Esophagus muscularis mucosa (tissue), 4 donors: ENCODE measurements at regions of chr1 and their contacts with region 1.

Region 1: DNA sequence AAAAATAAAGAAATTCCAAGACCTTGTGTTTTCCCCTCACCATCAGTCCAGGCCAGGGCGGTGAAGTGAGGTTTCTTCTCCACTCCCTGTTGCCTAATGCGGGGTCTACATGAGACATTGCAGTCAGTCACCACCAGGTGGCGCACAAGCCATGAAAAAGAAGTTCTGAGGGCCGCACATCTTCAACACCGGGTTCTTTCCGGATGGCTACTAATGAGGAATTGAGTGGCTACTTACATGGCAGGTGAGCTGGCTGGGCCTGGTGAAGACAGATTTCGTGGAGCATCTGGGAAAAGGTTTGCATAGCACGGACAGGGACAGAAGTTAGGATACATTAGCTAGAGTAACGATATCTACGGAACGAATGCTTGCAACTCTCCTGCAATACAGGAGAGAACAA is 15.8 kb upstream of the S100A11 start:
- DNase-seq: peak; percentile 97
- H3K4me3 ChIP-seq: no peak overlapping the region
- H3K27ac ChIP-seq: no peak overlapping the region
- H3K4me1 ChIP-seq: peaks cover 11 to 16% (median 13%) of the 10 kb centered on the region in 4 donors
- H3K27me3 ChIP-seq: peaks cover 0 to 14% (median 4%) of the 10 kb centered on the region in 4 donors
- CTCF ChIP-seq: peak; percentile 79 to 94 (median 85)
- EP300 ChIP-seq: no peak
- POLR2A ChIP-seq: no peak

Region 2: DNA sequence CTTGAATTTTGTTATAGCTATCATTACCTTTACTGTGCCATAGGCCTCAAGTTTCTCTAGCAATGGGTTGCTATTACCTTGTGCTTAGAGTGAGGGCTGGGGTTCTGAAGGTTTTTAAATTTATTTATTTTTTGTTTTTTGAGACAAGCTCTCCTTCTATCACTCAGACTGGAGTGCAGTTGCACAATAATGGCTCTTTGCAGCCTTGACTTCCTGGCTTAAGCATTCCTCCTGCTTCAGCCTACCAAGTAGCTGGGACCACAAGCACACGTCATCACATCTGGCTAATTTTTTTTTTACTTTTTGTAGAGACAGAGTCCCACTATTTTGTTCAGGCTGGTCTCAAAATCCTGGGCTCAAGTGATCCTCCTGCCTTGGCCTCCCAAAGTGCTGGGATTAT is 399.2 kb before region 1 on chr1:
- intact Hi-C with region 1: no loop called
- DNase-seq: no peak
- H3K4me3 ChIP-seq: no peak overlapping the region
- H3K27ac ChIP-seq: peak overlapping the region in 1 of 4 donors; percentile 10
- H3K4me1 ChIP-seq: peaks cover 0 to 24% (median 20%) of the 10 kb centered on the region in 4 donors
- H3K27me3 ChIP-seq: no peaks in the 10 kb centered on the region
- CTCF ChIP-seq: no peak
- EP300 ChIP-seq: no peak
- POLR2A ChIP-seq: no peak

Region 3: DNA sequence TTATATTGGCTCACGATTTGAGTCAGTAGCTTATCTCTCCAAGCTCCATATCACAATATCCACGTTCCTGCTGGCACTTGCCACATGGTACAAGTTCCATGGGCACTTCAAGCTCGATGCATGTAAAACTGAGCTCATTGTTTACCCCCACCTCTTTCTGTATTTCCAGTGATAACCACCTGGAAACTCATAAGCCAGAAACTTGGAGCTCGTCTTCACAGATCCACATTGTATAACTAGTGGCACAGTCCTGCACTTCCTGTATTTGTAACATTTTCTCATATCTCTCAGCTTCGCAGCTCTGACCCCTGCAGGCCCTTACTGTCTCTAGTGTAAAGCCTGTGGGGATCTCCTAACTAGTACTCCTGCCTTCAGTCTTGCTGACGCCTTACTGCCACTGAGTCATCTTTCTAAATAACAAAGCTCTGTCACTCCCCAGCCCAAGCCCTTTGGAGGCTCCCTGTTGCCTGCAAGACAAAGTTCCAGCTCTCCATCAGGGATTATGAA is 206.5 kb before region 1 on chr1:
- intact Hi-C with region 1: no loop called
- DNase-seq: no peak
- H3K4me3 ChIP-seq: no peak overlapping the region
- H3K27ac ChIP-seq: no peak overlapping the region
- H3K4me1 ChIP-seq: no peaks in the 10 kb centered on the region
- H3K27me3 ChIP-seq: peaks cover 0 to 41% (median 0%) of the 10 kb centered on the region in 4 donors
- CTCF ChIP-seq: no peak
- EP300 ChIP-seq: no peak
- POLR2A ChIP-seq: no peak

Region 4: DNA sequence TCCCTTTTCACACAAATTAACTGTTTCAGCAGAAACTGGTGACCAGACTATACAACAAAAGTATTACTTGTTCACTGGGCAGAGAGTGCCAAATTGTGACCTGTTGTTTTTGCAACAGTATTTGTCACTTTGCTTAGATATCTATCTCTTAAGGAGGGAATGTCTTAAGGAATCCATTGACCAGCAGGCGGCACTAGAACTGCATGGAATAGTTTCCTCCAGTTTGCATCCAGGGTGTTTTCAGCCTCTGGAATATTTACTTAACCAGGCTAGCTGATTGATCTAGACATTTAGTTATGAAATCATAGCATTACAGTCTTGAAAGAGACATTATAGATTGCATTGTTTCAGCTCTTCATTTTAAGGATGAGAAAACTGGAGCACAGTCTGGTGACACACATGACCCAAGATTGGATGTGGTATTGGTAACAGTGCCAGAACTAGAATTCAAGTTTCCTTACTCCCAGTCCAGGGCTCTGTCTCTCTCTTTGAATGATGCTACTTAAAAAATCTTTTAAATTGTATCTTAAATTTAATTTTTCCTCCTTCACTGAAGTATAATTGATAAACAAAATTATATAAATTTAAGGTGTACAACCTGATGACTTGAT is 89.5 kb after region 1 on chr1:
- intact Hi-C with region 1: no loop called
- DNase-seq: peak; percentile 83
- H3K4me3 ChIP-seq: no peak overlapping the region
- H3K27ac ChIP-seq: no peak overlapping the region
- H3K4me1 ChIP-seq: no peaks in the 10 kb centered on the region
- H3K27me3 ChIP-seq: peaks cover 0 to 21% (median 0%) of the 10 kb centered on the region in 4 donors
- CTCF ChIP-seq: peak; percentile 59 to 65 (median 62)
- EP300 ChIP-seq: no peak
- POLR2A ChIP-seq: no peak

Region 5: DNA sequence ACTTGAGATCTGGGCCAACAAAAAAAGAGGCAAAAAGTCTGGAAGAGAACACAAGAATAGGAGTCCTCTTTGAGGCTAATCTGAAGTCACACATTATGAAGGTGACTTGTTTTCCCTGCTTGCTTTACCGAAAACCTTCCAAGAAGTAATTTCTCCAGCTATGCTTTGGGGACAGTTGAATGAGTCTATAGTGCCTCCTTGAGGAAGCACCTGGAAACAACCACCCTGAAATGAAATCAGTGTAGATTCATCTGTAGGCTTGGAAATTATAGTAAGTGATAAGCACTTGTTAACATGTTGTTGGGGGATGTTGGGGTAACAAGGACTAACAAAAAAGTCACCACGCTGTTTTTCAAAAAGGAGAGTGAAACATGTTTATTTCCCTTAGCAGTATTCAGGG is 129.8 kb after region 1 on chr1:
- intact Hi-C with region 1: loop called (anchors 2 kb)
- DNase-seq: no peak
- H3K4me3 ChIP-seq: no peak overlapping the region
- H3K27ac ChIP-seq: no peak overlapping the region
- H3K4me1 ChIP-seq: peaks cover 0 to 7% (median 5%) of the 10 kb centered on the region in 4 donors
- H3K27me3 ChIP-seq: no peaks in the 10 kb centered on the region
- CTCF ChIP-seq: peak in 2 of 3 experiments; percentile 28 to 35
- EP300 ChIP-seq: no peak
- POLR2A ChIP-seq: no peak

Region 6: GRCh38 chr1:152347116-152347728 is 294.6 kb after region 1 on chr1:
- intact Hi-C with region 1: loop called (anchors 10 kb)
- DNase-seq: no peak
- H3K4me3 ChIP-seq: no peak overlapping the region
- H3K27ac ChIP-seq: no peak overlapping the region
- H3K4me1 ChIP-seq: no peaks in the 10 kb centered on the region
- H3K27me3 ChIP-seq: no peaks in the 10 kb centered on the region
- CTCF ChIP-seq: peak; percentile 61 to 74 (median 68)
- EP300 ChIP-seq: no peak
- POLR2A ChIP-seq: no peak

Region 7: DNA sequence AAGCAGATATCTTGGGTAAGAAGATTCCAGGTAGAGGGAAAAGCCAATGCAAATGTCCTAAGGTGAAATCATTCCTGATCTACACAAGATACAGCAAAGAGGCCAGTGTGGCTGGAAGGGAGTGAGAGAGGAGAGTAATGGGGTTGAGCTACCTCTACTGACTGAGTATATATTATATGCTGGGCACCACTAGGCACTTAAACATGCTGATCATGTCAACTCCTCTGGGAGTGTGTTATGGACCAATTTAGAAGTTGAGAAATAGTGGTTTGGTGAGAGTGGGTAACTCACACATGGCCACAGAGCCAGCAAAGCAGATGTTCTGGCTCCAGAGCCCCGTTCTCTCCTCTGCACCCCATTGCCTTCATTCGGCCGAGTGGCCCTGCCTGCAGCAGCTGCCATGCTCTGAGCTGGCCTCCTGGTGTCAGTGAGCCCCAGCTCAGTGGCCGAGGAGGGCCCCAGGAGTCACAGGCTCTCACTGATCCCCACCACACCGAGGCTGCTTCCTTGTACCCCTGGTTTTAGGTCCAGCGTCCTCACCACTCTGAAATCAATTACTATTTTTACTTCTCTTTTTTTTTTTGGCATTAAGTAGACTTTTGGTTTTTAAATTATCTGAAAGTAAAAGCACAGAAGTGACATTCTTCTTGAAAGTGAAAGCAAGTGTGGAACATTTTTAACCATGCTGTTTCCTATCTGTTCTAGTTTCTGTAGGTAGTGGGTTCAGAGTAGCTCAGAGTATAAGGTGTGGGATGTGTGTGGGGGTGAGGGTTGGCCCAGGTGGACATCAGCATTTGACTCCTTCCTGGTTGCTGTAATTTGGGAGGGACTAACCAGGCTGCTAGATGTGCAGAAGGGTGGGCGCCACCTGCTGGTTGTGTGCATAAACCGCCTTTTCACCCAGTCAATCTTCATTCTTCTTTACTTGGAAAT is 407.3 kb after region 1 on chr1:
- intact Hi-C with region 1: loop called (anchors 5 kb)
- DNase-seq: peak; percentile 77
- H3K4me3 ChIP-seq: peak overlapping the region in 2 of 4 donors; percentile 3 to 12
- H3K27ac ChIP-seq: peak overlapping the region in 1 of 4 donors; percentile 11
- H3K4me1 ChIP-seq: peaks cover 0 to 9% (median 3%) of the 10 kb centered on the region in 4 donors
- H3K27me3 ChIP-seq: no peaks in the 10 kb centered on the region
- CTCF ChIP-seq: peak; percentile 43 to 75 (median 66)
- EP300 ChIP-seq: no peak
- POLR2A ChIP-seq: no peak